GM12878 (cell line): ENCODE measurements at regions of chr9 and their contacts with region 1.

Region 1: GRCh38 chr9:11686733-11687132 is 1006.5 kb upstream of the TYRP1 start:
- DNase-seq: no peak
- ATAC-seq: no peak
- H3K4me3 ChIP-seq: no peak overlapping the region
- H3K27ac ChIP-seq: no peak overlapping the region
- H3K4me1 ChIP-seq: no peaks in the 10 kb centered on the region
- H3K27me3 ChIP-seq: no peaks in the 10 kb centered on the region
- CTCF ChIP-seq: no peak
- EP300 ChIP-seq: no peak
- POLR2A ChIP-seq: no peak
- RAD21 ChIP-seq: no peak

Region 2: DNA sequence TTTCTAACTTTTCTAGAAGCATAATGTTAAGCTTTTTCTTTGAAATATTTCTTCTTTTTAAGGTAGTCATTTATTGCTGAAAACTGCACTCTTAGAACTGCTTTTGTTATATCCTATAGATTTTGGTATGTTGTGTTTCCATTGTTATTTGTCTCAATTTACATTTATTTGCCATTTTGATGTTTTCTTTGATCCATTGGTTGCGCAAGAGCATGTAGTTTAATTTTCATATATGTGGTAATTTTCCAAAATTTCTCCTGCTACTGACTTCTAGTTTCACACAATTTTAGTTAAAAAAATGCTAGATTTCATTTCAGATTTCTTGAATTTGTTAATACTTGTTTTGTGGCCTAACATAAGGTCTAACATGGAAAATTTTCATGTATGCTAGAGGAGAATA is 22.8 kb before region 1 on chr9:
- CTCF ChIA-PET with region 1: no interaction called
- POLR2A ChIA-PET with region 1: no interaction called
- RAD21 ChIA-PET with region 1: no interaction called
- SMC1A ChIA-PET with region 1: no interaction called
- in situ Hi-C with region 1: no loop called
- intact Hi-C with region 1: loop called (anchors 2 kb)
- DNase-seq: no peak
- ATAC-seq: no peak
- H3K4me3 ChIP-seq: no peak overlapping the region
- H3K27ac ChIP-seq: no peak overlapping the region
- H3K4me1 ChIP-seq: no peaks in the 10 kb centered on the region
- H3K27me3 ChIP-seq: no peaks in the 10 kb centered on the region
- CTCF ChIP-seq: no peak
- EP300 ChIP-seq: no peak
- POLR2A ChIP-seq: no peak
- RAD21 ChIP-seq: no peak